ENCODE measurements at regions of chr11 and their contacts with region 1.

Region 1: GRCh38 chr11:57249384-57250319 is 12.6 kb upstream of the APLNR start:
- DNase-seq: peak; percentile 70
- H3K4me3 Mint-ChIP-seq: no peak overlapping the region
- H3K27ac Mint-ChIP-seq: no peak overlapping the region
- H3K4me1 Mint-ChIP-seq: peaks cover 6% of the 10 kb centered on the region
- H3K27me3 Mint-ChIP-seq: peaks cover 34% of the 10 kb centered on the region

Region 2: DNA sequence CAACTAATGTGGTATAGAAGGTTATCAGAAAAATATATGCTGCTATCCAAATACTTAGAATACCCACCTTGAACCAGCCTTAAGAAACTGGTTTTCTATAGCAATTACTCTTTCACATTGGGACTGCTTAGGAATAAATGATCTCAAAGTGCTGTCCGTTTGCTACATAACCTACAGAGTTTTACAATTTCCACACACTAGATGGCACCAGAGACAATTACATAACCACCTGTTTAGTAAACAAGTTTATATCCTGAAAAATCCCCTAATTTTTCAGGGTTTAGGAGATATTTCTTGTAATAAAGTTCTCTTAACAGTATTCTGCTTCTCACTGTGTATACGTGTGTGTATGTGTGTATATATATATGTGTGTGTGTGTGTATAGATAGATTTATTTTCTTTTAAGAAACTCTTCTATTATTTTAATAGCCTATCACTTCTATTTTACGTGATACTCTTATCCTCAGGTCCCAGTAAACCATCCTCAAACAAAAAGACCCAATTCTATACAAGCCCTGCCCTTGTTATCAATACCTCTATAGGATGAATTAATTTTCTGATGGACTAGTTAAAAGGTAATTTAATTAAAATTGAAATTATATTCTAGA is 1306.8 kb before region 1 on chr11:
- CTCF ChIA-PET with region 1: no interaction called
- intact Hi-C with region 1: loop called (anchors 2 kb)
- DNase-seq: no peak
- H3K4me3 Mint-ChIP-seq: no peak overlapping the region
- H3K27ac Mint-ChIP-seq: no peak overlapping the region
- H3K4me1 Mint-ChIP-seq: no peaks in the 10 kb centered on the region
- H3K27me3 Mint-ChIP-seq: no peaks in the 10 kb centered on the region

Region 3: GRCh38 chr11:56841210-56841810 is 408.3 kb before region 1 on chr11:
- CTCF ChIA-PET with region 1: interaction called, 48 read pairs
- intact Hi-C with region 1: loop called (anchors 1 kb)
- DNase-seq: peak; percentile 59
- H3K4me3 Mint-ChIP-seq: no peak overlapping the region
- H3K27ac Mint-ChIP-seq: no peak overlapping the region
- H3K4me1 Mint-ChIP-seq: no peaks in the 10 kb centered on the region
- H3K27me3 Mint-ChIP-seq: peaks cover 14% of the 10 kb centered on the region

Region 4: DNA sequence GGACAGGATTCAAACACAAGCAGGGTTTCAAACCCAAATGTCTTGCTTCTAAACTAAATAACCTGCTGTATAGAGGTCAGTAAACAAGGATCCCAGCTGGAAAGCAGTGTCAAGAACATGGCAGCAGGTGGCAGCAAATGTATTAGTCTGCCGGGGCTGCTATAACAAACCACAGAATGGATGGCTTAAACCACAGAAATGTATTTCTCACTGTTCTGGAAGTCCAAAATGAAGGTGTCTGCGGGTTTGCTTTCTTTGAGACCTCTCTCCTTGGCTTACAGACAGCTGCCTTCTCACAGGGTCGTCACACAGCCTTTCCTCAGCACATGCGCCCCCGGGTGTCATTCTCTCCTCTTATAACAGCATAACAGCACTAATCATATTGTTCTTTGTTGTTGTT is 133.0 kb before region 1 on chr11:
- CTCF ChIA-PET with region 1: interaction called, 24 read pairs
- intact Hi-C with region 1: loop called (anchors 1 kb)
- DNase-seq: peak; percentile 42
- H3K4me3 Mint-ChIP-seq: no peak overlapping the region
- H3K27ac Mint-ChIP-seq: no peak overlapping the region
- H3K4me1 Mint-ChIP-seq: no peaks in the 10 kb centered on the region
- H3K27me3 Mint-ChIP-seq: peaks cover 3% of the 10 kb centered on the region

Region 5: GRCh38 chr11:57277845-57278709 is 28.4 kb after region 1 on chr11:
- CTCF ChIA-PET with region 1: interaction called, 10 read pairs
- intact Hi-C with region 1: no loop called
- DNase-seq: peak; percentile 60
- H3K4me3 Mint-ChIP-seq: no peak overlapping the region
- H3K27ac Mint-ChIP-seq: no peak overlapping the region
- H3K4me1 Mint-ChIP-seq: peaks cover 5% of the 10 kb centered on the region
- H3K27me3 Mint-ChIP-seq: peaks cover 23% of the 10 kb centered on the region

Measured in activated naive CD4-positive, alpha-beta T cell treated with anti-CD3 and anti-CD28 coated beads for 36 hours (primary cell).